ENCODE measurements at regions of chr14 and their contacts with region 1.

Region 1: GRCh38 chr14:20477211-20477876 is 8.1 kb downstream of the PNP start:
- DNase-seq: peak in 6 of 10 donors; percentile 20 to 63 (median 45)
- ATAC-seq: peak; percentile 76 to 83
- H3K4me3 Mint-ChIP-seq: peak overlapping the region; percentile 47 to 87 (median 72)
- H3K27ac Mint-ChIP-seq: peak overlapping the region; percentile 88 to 98 (median 92)
- H3K4me1 Mint-ChIP-seq: peaks cover 43 to 87% (median 85%) of the 10 kb centered on the region in 4 donors
- H3K27me3 Mint-ChIP-seq: no peaks in the 10 kb centered on the region

Region 2: DNA sequence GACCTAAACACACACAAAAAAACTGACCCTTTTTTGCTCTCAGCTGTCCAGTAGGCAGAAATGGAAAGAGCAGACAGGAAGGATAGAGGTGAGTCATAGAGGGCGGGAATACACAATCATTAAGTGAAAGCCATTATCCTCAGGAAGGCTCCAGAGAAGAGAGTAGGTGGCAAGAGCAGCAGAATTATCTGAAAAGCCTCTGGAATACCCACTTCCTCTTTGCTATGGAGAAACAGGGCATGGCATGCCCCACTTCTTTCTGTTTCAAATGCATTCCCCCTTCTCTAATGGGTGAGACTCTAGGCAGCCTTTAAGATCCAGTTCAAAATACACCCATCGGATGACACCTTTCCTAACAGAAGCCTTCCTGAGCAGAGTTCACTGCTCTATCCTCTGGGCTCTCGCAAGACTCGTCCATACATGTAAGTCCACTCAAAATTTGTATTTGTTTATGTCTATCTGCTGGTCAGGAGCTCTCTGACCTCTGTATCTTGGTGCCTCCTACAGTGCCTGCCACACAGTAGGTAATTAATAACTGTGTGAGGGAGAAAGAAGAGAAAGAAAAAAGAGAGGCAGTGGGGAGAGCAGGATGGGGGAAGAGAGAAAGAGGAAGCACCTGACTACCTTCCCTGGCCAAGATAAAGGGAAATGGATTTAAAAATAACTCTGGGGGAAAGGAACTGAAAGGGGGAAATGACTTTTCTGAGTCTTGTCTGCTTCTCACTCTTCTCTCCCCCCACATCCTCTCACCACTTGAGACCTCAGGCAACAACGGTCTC is 49.9 kb before region 1 on chr14:
- POLR2A ChIA-PET with region 1: no interaction called
- DNase-seq: peak in 2 of 10 donors; percentile 21 to 32
- ATAC-seq: peak; percentile 38 to 62
- H3K4me3 Mint-ChIP-seq: peak overlapping the region; percentile 45 to 80 (median 79)
- H3K27ac Mint-ChIP-seq: peak overlapping the region; percentile 88 to 95 (median 93)
- H3K4me1 Mint-ChIP-seq: peaks cover 24 to 50% (median 46%) of the 10 kb centered on the region in 4 donors
- H3K27me3 Mint-ChIP-seq: no peaks in the 10 kb centered on the region

Region 3: GRCh38 chr14:20489093-20489994 is 12.0 kb after region 1 on chr14:
- POLR2A ChIA-PET with region 1: interaction called, 31 read pairs
- DNase-seq: peak in 4 of 10 donors; percentile 17 to 45 (median 28)
- ATAC-seq: peak; percentile 79 to 89
- H3K4me3 Mint-ChIP-seq: peak overlapping the region; percentile 36 to 84 (median 76)
- H3K27ac Mint-ChIP-seq: peak overlapping the region; percentile 47 to 95 (median 86)
- H3K4me1 Mint-ChIP-seq: peaks cover 42 to 86% (median 72%) of the 10 kb centered on the region in 4 donors
- H3K27me3 Mint-ChIP-seq: no peaks in the 10 kb centered on the region

Region 4: GRCh38 chr14:21014761-21015190 is 537.4 kb after region 1 on chr14:
- POLR2A ChIA-PET with region 1: no interaction called
- DNase-seq: peak; percentile 66 to 88 (median 78)
- ATAC-seq: peak; percentile 83 to 95
- H3K4me3 Mint-ChIP-seq: no peak overlapping the region
- H3K27ac Mint-ChIP-seq: no peak overlapping the region
- H3K4me1 Mint-ChIP-seq: peaks cover 0 to 2% (median under 1%) of the 10 kb centered on the region in 4 donors
- H3K27me3 Mint-ChIP-seq: peaks cover 11 to 29% (median 15%) of the 10 kb centered on the region in 5 donors